GM12878 (cell line): ENCODE measurements at regions of chr1 and their contacts with region 1.

Region 1: GRCh38 chr1:212469701-212470458 is 37.2 kb downstream of the NENF start:
- DNase-seq: no peak
- ATAC-seq: no peak
- H3K4me3 ChIP-seq: no peak overlapping the region
- H3K27ac ChIP-seq: no peak overlapping the region
- H3K4me1 ChIP-seq: no peaks in the 10 kb centered on the region
- H3K27me3 ChIP-seq: no peaks in the 10 kb centered on the region
- CTCF ChIP-seq: no peak
- EP300 ChIP-seq: no peak
- POLR2A ChIP-seq: no peak
- RAD21 ChIP-seq: no peak

Region 2: DNA sequence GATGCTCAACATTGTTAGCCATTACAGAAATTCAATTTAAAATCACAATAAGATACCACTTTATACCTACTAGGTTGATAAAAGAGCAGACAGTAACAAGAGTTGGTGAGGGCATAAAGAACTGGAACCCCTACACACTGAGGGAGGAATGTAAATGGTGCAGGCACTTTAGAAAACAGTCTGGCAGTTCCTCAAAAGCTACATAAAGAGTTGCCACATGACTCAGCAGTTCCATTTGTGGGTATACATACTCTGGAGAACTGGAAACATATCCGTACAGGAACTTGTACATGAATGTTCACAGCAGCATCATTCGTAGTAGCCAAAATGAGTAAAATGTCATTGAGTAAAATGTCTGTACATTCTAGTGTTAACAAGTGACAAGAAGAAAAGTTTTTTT is 304.7 kb after region 1 on chr1:
- CTCF ChIA-PET with region 1: no interaction called
- POLR2A ChIA-PET with region 1: no interaction called
- RAD21 ChIA-PET with region 1: no interaction called
- SMC1A ChIA-PET with region 1: no interaction called
- in situ Hi-C with region 1: loop called (anchors 5 kb)
- intact Hi-C with region 1: no loop called
- DNase-seq: no peak
- ATAC-seq: peak; percentile 53
- H3K4me3 ChIP-seq: no peak overlapping the region
- H3K27ac ChIP-seq: no peak overlapping the region
- H3K4me1 ChIP-seq: peaks cover 4% of the 10 kb centered on the region; the same call in 1 of the 2 replicates
- H3K27me3 ChIP-seq: no peaks in the 10 kb centered on the region
- CTCF ChIP-seq: no peak
- EP300 ChIP-seq: no peak
- POLR2A ChIP-seq: no peak
- RAD21 ChIP-seq: no peak